ENCODE measurements at regions of chr17 and their contacts with region 1.

Region 1: GRCh38 chr17:48878918-48879898 is 13.4 kb upstream of the ATP5MC1 start:
- DNase-seq: peak; percentile 66
- ATAC-seq: peak; percentile 99
- H3K4me3 ChIP-seq: no peak overlapping the region
- H3K27ac ChIP-seq: no peak overlapping the region
- H3K4me1 ChIP-seq: no peaks in the 10 kb centered on the region
- H3K27me3 ChIP-seq: peaks cover 2% of the 10 kb centered on the region
- CTCF ChIP-seq: peak; percentile 97
- POLR2A ChIP-seq: 0 out of 2 replicates have a peak, but pooled peaks have one; percentile 36
- RAD21 ChIP-seq: peak; percentile 98

Region 2: GRCh38 chr17:48671697-48672171 is 207.5 kb before region 1 on chr17:
- CTCF ChIA-PET with region 1: interaction called, 9 read pairs
- POLR2A ChIA-PET with region 1: no interaction called
- dilution Hi-C with region 1: no loop called
- in situ Hi-C with region 1: loop called (anchors 5 kb)
- intact Hi-C with region 1: loop called (anchors 2 kb)
- DNase-seq: peak; percentile 67
- ATAC-seq: peak; percentile 93
- H3K4me3 ChIP-seq: peak overlapping the region; percentile 35
- H3K27ac ChIP-seq: no peak overlapping the region
- H3K4me1 ChIP-seq: no peaks in the 10 kb centered on the region
- H3K27me3 ChIP-seq: peaks cover 26% of the 10 kb centered on the region
- CTCF ChIP-seq: peak; percentile 91
- POLR2A ChIP-seq: no peak
- RAD21 ChIP-seq: peak; percentile 83

Region 3: DNA sequence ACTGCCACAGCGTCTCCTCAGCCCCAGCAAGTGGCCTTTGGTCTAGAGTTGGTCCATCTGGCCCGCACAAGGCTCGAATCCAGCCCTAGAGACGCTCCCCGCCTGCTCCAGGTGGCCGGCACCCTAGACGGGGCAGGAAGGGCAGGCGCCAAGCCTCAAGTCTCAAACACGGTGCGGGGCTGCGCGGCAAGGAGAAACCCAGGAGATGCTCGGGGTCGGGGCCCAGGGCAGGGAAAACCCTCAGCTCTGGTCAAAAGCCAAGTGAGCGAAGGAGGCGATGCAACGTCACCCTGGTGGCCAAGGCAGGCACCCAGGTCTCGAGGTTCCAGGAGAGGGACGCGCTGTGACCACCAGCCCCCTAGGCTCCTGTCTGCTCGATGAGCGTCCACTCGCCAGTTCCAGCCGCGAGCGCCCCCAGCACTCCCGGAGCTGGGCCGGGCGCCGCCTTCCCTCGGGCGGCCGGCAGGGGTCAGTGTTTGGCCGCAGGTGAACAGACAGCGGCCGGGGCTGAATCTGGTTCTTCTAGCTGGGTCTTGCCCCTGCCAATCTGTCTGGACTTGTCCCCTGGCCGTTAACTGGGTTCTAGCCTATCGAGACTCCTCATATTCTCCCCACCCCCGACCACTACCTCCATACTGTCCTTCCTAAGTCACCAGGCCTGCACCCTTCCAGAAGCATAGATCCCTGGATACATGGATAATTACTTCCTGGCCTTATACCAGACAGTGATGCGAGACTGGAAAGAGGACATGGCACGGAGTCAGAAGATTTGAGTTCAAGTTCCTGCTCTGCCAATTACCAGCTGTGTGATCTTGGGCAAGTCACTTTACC is 200.9 kb before region 1 on chr17:
- CTCF ChIA-PET with region 1: interaction called, 12 read pairs
- POLR2A ChIA-PET with region 1: no interaction called
- dilution Hi-C with region 1: no loop called
- in situ Hi-C with region 1: loop called (anchors 5 kb)
- intact Hi-C with region 1: loop called (anchors 1 kb)
- DNase-seq: peak; percentile 19
- ATAC-seq: peak; percentile 98
- H3K4me3 ChIP-seq: no peak overlapping the region
- H3K27ac ChIP-seq: no peak overlapping the region
- H3K4me1 ChIP-seq: no peaks in the 10 kb centered on the region
- H3K27me3 ChIP-seq: peaks cover 49% of the 10 kb centered on the region
- CTCF ChIP-seq: peak; percentile 89
- POLR2A ChIP-seq: no peak
- RAD21 ChIP-seq: peak; percentile 76

Region 4: DNA sequence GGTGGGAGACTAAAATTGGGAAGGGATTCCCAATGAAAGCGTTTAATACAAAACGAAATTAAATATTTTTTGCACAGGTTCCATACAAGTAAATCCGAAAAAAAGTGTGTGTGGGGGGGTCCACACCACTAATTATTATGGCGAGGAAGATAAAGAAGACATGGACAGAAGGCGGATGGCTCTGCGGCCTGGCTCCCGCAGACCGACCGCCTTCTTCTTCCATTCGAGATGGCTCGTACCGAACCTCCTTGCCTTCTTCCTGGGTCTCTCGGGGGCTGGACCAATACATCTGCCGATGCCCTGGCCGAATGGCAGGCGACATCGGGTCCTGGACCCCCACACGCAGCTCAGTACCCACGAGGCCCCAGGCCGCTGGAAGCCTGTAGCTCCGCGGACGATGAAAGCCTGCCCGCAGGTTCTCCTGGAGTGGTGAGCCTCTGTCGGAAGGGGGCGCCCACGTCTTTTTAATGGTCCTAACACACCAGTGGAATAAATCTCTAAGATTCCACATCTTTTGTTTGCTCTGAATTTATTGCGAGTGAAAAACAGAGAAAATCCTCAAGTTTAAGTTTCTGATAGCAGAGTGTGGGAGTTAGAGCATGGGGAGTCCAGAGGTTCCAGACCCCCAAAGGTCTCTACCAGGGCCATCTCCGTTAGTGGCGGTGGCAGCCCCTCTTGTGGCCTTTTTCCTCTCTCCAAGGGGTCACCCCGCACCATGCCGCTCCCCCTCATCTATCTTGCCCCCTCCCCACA is 154.8 kb before region 1 on chr17:
- CTCF ChIA-PET with region 1: interaction called, 8 read pairs
- POLR2A ChIA-PET with region 1: no interaction called
- dilution Hi-C with region 1: no loop called
- in situ Hi-C with region 1: loop called (anchors 5 kb)
- intact Hi-C with region 1: loop called (anchors 1 kb)
- DNase-seq: peak; percentile 67
- ATAC-seq: peak; percentile 94
- H3K4me3 ChIP-seq: no peak overlapping the region
- H3K27ac ChIP-seq: no peak overlapping the region
- H3K4me1 ChIP-seq: no peaks in the 10 kb centered on the region
- H3K27me3 ChIP-seq: peaks cover 95% of the 10 kb centered on the region
- CTCF ChIP-seq: peak; percentile 84
- POLR2A ChIP-seq: no peak
- RAD21 ChIP-seq: peak; percentile 80

Region 5: DNA sequence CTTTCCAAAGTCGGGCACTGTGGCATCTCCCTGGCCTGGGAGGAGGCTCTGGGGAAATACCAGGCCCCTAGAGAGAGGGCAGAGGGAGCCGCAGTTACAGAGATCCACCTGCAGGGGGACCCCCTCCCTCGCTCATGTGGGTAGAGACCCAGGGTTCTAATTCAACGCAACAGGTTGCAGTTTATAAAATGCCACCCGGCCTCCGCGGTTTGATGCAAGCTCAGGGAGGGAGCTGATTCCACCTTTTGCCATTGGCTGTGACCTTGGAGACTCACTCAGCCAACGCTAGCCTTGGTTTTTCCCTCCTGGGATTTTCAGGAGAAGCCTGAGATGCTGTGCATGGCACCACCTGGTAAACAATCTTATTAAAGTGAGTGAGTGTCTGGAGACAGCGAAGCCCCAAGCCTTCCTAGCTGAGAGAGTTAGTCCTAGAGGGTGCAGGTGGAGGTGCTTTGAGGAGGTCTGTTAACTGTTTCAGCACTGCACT is 74.2 kb before region 1 on chr17:
- CTCF ChIA-PET with region 1: interaction called, 27 read pairs
- POLR2A ChIA-PET with region 1: no interaction called
- dilution Hi-C with region 1: no loop called
- in situ Hi-C with region 1: loop called (anchors 5 kb)
- intact Hi-C with region 1: loop called (anchors 1 kb)
- DNase-seq: peak; percentile 37
- ATAC-seq: peak; percentile 98
- H3K4me3 ChIP-seq: no peak overlapping the region
- H3K27ac ChIP-seq: no peak overlapping the region
- H3K4me1 ChIP-seq: peaks cover 7% of the 10 kb centered on the region
- H3K27me3 ChIP-seq: peaks cover 4% of the 10 kb centered on the region
- CTCF ChIP-seq: peak; percentile 87
- POLR2A ChIP-seq: 0 out of 2 replicates have a peak, but pooled peaks have one; percentile 31
- RAD21 ChIP-seq: peak; percentile 86

Region 6: DNA sequence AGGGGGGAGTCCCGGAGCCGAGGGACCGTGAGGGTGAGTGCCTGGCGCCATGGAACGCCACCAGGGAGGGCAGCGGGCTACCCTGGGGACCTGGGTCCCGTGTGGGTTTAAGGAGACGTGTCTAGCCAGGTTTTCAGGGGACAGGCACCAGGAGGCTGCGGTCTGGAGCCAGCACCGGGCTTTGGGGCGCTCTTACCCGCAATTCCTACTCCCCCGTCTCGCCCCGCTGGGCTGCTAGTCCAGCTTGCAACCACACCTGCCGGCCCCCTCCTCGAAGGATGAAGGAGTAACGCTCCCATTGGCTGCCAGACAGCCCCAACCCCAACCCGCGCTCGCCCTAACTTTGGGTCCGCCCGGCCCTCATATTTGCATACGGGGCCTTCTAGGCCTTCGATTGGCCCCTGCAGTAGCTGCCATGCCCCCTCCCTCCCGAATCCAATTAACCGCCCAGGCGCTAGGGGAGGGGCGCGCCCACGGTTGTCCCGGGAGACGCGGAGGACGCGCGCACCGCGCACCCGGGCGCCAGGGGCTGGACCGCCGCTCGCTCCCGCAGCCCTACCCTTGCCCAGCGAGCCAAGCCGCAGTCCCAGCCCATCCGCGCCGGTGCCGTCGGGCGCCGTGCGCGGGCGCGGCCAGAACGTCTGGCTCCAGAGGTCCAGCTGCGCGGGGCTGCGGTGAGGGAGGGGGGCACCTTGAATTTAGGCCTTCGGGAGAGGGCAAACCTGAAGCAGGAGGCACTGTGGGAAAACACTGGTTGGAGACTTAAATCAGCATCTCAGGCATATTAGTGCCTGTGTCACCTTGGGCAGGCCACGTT is 62.2 kb before region 1 on chr17 and contains the start of gene TTLL6:
- CTCF ChIA-PET with region 1: interaction called, 82 read pairs
- POLR2A ChIA-PET with region 1: no interaction called
- dilution Hi-C with region 1: no loop called
- in situ Hi-C with region 1: no loop called
- intact Hi-C with region 1: loop called (anchors 1 kb)
- DNase-seq: peak; percentile 56
- ATAC-seq: peak; percentile 99
- H3K4me3 ChIP-seq: peak within 1 kb of the TSS; percentile 41
- H3K27ac ChIP-seq: no peak within 1 kb of the TSS
- H3K4me1 ChIP-seq: 0 out of 2 replicates have a peak, but pooled peaks cover 2% of the 10 kb centered on the region
- H3K27me3 ChIP-seq: peaks cover 31% of the 10 kb centered on the region
- CTCF ChIP-seq: no peak
- POLR2A ChIP-seq: no peak
- RAD21 ChIP-seq: no peak
- total RNA-seq, gene TTLL6: not detected in 2 replicates

Region 7: DNA sequence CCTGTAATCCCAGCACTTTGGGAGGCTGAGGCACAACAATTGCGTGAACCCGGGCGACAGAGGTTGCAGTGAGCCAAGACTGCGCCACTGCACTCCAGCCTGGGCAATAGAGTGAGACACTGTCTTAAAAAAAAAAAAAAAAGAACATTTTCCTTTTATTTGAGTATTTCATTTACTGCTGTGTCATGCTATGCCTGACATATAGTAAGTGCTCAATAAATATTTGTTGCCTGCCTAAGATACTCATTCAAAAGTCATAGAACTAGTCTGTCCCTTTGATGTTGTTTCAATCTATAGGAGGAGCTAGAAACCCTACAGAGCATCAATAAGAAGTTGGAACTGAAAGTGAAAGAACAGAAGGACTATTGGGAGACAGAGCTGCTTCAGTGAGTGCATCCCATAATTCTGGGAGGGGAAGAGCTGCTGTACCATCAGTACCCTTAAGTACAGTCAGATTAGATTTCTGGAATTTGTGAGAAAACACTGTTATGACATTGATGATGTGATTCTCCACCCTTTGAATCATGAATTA is 28.4 kb before region 1 on chr17:
- CTCF ChIA-PET with region 1: no interaction called
- POLR2A ChIA-PET with region 1: no interaction called
- dilution Hi-C with region 1: no loop called
- in situ Hi-C with region 1: no loop called
- intact Hi-C with region 1: no loop called
- DNase-seq: no peak
- ATAC-seq: no peak
- H3K4me3 ChIP-seq: no peak overlapping the region
- H3K27ac ChIP-seq: no peak overlapping the region
- H3K4me1 ChIP-seq: no peaks in the 10 kb centered on the region
- H3K27me3 ChIP-seq: no peaks in the 10 kb centered on the region
- CTCF ChIP-seq: no peak
- POLR2A ChIP-seq: no peak
- RAD21 ChIP-seq: no peak

Region 8: DNA sequence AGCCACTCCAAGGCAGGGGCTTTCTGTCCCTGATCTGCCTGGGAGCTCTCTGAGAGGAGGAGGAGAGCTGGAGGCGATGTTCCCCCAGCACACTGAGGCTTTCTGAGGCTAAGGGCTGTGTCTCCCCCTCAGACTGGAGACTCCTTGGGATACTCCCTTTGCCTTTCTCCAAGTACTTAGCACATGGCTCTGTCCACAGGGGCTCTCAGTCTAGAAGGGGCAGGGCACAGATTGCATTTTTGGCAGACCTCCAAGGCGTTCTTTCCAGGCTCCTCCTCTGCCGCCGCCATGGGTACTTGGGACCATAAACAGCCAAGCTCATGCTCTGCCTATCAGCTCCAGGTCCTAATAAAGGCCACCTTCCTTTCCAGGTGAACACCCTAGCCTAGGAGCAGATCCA is 91.0 kb after region 1 on chr17:
- CTCF ChIA-PET with region 1: no interaction called
- POLR2A ChIA-PET with region 1: no interaction called
- dilution Hi-C with region 1: no loop called
- in situ Hi-C with region 1: no loop called
- intact Hi-C with region 1: no loop called
- DNase-seq: no peak
- ATAC-seq: no peak
- H3K4me3 ChIP-seq: no peak overlapping the region
- H3K27ac ChIP-seq: no peak overlapping the region
- H3K4me1 ChIP-seq: peaks cover 22% of the 10 kb centered on the region
- H3K27me3 ChIP-seq: no peaks in the 10 kb centered on the region
- CTCF ChIP-seq: no peak
- POLR2A ChIP-seq: no peak
- RAD21 ChIP-seq: no peak